Activated T-helper 2 cell treated with anti-CD3 and anti-CD28 coated beads, Interferon-gamma antibody, Interleukin-2, Interleukin-4, amounts not matched to agents 10 μg/mL and 5 μg/mL and 100 μg/mL, durations not matched to agents 14 hours and 24 hours and 36 hours (primary cell): ENCODE measurements at regions of chr18 and their contacts with region 1.

Region 1: DNA sequence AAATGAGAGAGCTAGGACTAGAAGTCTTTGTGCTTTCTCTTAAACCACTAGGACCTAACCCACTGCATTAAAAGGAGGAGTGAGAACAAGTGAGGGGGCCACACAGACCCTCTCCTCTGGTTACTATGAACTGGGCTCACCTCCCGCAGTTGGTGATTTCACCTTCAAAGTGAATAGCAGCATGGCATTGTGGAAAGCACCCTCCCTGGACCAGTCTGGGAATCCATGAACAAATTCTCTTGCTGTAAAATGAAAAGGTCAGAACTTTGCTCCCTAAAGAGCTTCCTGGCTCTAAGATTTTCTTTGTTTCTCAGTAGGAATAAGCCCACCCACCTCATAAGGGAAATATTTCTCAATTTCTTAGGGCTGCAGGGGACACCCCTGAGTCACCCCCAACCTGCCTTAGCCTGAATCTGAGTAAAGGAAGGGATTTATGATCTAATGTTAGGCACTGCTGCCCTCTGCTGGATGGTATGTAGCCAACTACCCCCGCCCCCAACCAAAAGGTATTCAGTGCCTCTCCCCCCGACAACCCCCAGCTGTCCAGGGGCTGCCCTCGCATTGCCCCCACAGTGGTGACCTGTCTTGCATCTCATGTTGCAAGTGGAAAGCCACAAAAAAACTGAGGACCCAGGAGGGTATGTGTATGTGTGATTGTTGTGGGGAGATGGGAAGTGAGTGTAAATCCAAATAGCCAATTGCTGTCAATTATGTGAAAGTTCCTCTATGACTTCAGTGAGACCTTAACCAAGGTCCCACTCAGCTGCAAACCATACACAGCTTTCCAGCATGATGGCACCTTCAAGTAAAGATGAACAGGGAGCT is 230.9 kb upstream of the SLC14A2 start:
- DNase-seq: peak; percentile 11
- H3K4me3 Mint-ChIP-seq: no peak overlapping the region
- H3K27ac Mint-ChIP-seq: no peak overlapping the region
- H3K4me1 Mint-ChIP-seq: no peaks in the 10 kb centered on the region
- H3K27me3 Mint-ChIP-seq: peaks cover 23% of the 10 kb centered on the region

Region 2: GRCh38 chr18:43620936-43621335 is 1763.4 kb before region 1 on chr18:
- intact Hi-C with region 1: loop called (anchors 2 kb)
- DNase-seq: no peak
- H3K4me3 Mint-ChIP-seq: no peak overlapping the region
- H3K27ac Mint-ChIP-seq: no peak overlapping the region
- H3K4me1 Mint-ChIP-seq: no peaks in the 10 kb centered on the region
- H3K27me3 Mint-ChIP-seq: no peaks in the 10 kb centered on the region

Region 3: GRCh38 chr18:44128365-44128764 is 1256.0 kb before region 1 on chr18:
- intact Hi-C with region 1: loop called (anchors 5 kb)
- DNase-seq: no peak
- H3K4me3 Mint-ChIP-seq: no peak overlapping the region
- H3K27ac Mint-ChIP-seq: no peak overlapping the region
- H3K4me1 Mint-ChIP-seq: no peaks in the 10 kb centered on the region
- H3K27me3 Mint-ChIP-seq: no peaks in the 10 kb centered on the region

Region 4: DNA sequence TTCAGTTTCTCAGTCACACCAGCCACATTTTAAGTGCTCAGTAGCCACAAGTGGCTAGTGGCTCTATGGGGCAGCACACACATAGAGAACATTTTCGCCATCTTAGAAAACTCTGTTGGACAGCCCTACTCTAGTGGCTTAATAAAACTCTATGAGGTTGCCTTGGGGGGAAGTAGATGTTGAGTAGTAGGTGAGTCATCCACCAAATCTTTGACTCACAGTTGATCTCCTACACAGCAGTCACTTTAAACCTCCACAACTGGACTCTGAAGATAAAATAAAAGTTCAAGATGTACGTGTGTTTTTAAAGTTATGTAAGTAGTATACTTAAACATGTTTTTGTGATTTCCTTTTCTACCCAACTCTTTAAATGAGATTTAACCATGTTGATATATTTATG is 324.7 kb before region 1 on chr18:
- intact Hi-C with region 1: no loop called
- DNase-seq: no peak
- H3K4me3 Mint-ChIP-seq: no peak overlapping the region
- H3K27ac Mint-ChIP-seq: no peak overlapping the region
- H3K4me1 Mint-ChIP-seq: no peaks in the 10 kb centered on the region
- H3K27me3 Mint-ChIP-seq: no peaks in the 10 kb centered on the region

Region 5: DNA sequence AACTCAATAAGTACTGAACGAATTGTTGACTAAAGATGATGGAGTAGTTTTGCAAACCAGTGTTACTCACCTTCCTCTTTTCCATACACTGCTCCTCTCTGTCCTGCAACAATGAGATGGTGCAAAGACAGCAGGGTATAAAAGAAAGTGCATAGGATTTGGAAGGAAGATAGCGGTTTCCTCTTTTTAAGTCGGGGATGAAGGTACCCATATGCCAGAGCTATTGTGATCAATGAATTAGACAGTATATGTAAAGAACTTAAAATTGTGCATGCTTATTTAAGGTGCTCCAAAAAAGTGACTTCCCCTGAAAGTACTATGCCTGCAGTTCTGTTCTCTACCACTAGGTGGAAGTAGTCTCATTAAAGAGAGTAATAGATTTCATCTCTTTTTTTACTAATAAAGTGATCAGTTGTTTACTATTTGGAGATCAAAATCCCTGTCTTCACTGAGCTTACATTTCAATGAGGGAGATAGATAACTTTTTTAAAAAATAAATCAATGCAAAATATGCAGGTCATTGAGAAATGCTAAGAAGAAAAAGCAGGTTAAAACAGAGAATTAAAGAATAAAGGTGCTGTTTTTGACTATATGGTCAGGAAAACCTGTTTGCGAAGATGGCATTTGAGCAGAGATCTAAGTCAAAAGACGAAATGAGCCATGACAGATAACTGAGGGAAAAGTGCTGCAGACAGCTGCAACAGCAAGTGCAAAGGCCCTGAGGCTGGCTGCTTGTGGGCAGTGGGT is 108.8 kb before region 1 on chr18:
- intact Hi-C with region 1: loop called (anchors 2 kb)
- DNase-seq: no peak
- H3K4me3 Mint-ChIP-seq: no peak overlapping the region
- H3K27ac Mint-ChIP-seq: no peak overlapping the region
- H3K4me1 Mint-ChIP-seq: no peaks in the 10 kb centered on the region
- H3K27me3 Mint-ChIP-seq: peaks cover 2% of the 10 kb centered on the region

Region 6: GRCh38 chr18:45441110-45441842 is 56.9 kb after region 1 on chr18:
- intact Hi-C with region 1: no loop called
- DNase-seq: no peak
- H3K4me3 Mint-ChIP-seq: no peak overlapping the region
- H3K27ac Mint-ChIP-seq: no peak overlapping the region
- H3K4me1 Mint-ChIP-seq: no peaks in the 10 kb centered on the region
- H3K27me3 Mint-ChIP-seq: no peaks in the 10 kb centered on the region

Region 7: DNA sequence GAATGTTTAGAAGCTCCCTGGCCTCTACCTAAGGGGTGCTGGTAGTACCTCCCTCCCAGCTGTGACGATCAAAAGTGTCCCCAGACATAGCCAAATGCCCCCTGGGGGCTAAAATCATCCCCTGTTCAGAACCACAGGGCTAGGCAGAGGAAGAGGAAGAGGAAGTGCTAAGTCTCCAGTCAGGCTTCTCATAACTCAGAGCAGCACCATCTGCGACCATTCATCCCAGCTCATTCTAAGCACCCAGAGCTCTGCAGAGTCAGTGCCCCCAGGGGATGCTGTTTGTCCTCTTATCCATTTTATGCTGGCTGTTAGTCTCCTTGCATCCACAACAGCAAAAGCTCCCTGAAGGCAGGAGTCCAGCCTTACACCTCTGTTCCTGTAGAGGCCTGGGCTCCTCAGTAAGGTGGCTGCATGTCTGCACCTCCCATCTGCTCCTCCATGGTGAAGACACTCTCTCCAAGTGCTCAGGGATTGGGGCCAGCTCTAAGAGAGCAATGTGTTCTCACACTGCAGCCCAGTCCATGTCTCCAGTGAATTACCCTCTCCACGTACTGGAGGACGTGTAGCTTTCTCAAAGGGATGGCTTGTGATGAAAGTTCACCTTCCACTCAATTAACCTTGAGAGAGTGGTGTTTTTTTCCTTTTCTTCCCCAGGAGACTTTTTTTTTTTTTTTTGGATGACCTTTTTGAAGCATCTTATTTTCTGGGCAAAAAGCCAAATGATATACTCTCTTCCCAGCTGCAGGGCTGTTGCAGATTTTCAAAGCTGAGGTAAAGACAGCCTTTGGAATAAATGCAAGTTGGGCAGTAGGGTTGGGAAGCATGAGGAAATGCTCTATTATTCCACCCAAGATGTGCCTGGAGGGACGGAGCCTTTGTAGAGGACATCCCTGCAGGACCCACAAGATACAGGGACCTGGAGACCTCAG is 72.0 kb after region 1 on chr18:
- intact Hi-C with region 1: no loop called
- DNase-seq: no peak
- H3K4me3 Mint-ChIP-seq: no peak overlapping the region
- H3K27ac Mint-ChIP-seq: no peak overlapping the region
- H3K4me1 Mint-ChIP-seq: no peaks in the 10 kb centered on the region
- H3K27me3 Mint-ChIP-seq: no peaks in the 10 kb centered on the region